CD14-positive monocyte (primary cell): ENCODE measurements at regions of chr4 and their contacts with region 1.

Region 1: GRCh38 chr4:781493-782216 is 44.3 kb downstream of the CPLX1 start:
- DNase-seq: peak; percentile 96 to 99 (median 98)
- H3K4me3 ChIP-seq: peak overlapping the region; percentile 76 to 88 (median 86)
- H3K4me3 Mint-ChIP-seq: peak overlapping the region; percentile 86 to 93
- H3K27ac ChIP-seq: peak overlapping the region; percentile 83 to 98
- H3K27ac Mint-ChIP-seq: peak overlapping the region; percentile 90 to 97 (median 96)
- H3K4me1 ChIP-seq: peaks cover 32 to 38% of the 10 kb centered on the region in 2 donors
- H3K4me1 Mint-ChIP-seq: peaks cover 45% of the 10 kb centered on the region
- H3K27me3 ChIP-seq: peaks cover 4 to 24% of the 10 kb centered on the region in 2 donors
- H3K27me3 Mint-ChIP-seq: peaks cover 20 to 28% (median 23%) of the 10 kb centered on the region in 3 donors
- CTCF ChIP-seq: no peak

Region 2: GRCh38 chr4:683982-684622 is 97.6 kb before region 1 on chr4:
- intact Hi-C with region 1: loop called in 1 of 2 experiments (anchors 5 kb)
- DNase-seq: peak; percentile 50 to 62 (median 54)
- H3K4me3 ChIP-seq: no peak overlapping the region
- H3K4me3 Mint-ChIP-seq: no peak overlapping the region
- H3K27ac ChIP-seq: peak overlapping the region in 1 of 2 donors; percentile 5
- H3K27ac Mint-ChIP-seq: peak overlapping the region in 3 of 7 donors; percentile 25 to 48 (median 33)
- H3K4me1 ChIP-seq: peaks cover 47 to 56% of the 10 kb centered on the region in 2 donors
- H3K4me1 Mint-ChIP-seq: peaks cover 45% of the 10 kb centered on the region
- H3K27me3 ChIP-seq: no peaks in the 10 kb centered on the region
- H3K27me3 Mint-ChIP-seq: peaks cover 1 to 13% (median 8%) of the 10 kb centered on the region in 3 donors
- CTCF ChIP-seq: peak; percentile 97

Region 3: GRCh38 chr4:705278-706082 is 76.2 kb before region 1 on chr4 and contains the start of gene PCGF3:
- intact Hi-C with region 1: loop called (anchors 5 kb)
- DNase-seq: peak; percentile 92 to 96 (median 93)
- H3K4me3 ChIP-seq: peak within 1 kb of the TSS; percentile 60 to 94 (median 86)
- H3K4me3 Mint-ChIP-seq: peak within 1 kb of the TSS; percentile 78 to 88
- H3K27ac ChIP-seq: peak within 1 kb of the TSS; percentile 40 to 96
- H3K27ac Mint-ChIP-seq: peak within 1 kb of the TSS; percentile 69 to 97 (median 92)
- H3K4me1 ChIP-seq: peaks cover 41 to 58% of the 10 kb centered on the region in 2 donors
- H3K4me1 Mint-ChIP-seq: peaks cover 34% of the 10 kb centered on the region
- H3K27me3 ChIP-seq: no peaks in the 10 kb centered on the region
- H3K27me3 Mint-ChIP-seq: peaks cover 2 to 4% (median 3%) of the 10 kb centered on the region in 3 donors
- CTCF ChIP-seq: no peak
- polyA plus RNA-seq, gene PCGF3: 7.0 to 163 (median 8.3) TPM

Region 4: DNA sequence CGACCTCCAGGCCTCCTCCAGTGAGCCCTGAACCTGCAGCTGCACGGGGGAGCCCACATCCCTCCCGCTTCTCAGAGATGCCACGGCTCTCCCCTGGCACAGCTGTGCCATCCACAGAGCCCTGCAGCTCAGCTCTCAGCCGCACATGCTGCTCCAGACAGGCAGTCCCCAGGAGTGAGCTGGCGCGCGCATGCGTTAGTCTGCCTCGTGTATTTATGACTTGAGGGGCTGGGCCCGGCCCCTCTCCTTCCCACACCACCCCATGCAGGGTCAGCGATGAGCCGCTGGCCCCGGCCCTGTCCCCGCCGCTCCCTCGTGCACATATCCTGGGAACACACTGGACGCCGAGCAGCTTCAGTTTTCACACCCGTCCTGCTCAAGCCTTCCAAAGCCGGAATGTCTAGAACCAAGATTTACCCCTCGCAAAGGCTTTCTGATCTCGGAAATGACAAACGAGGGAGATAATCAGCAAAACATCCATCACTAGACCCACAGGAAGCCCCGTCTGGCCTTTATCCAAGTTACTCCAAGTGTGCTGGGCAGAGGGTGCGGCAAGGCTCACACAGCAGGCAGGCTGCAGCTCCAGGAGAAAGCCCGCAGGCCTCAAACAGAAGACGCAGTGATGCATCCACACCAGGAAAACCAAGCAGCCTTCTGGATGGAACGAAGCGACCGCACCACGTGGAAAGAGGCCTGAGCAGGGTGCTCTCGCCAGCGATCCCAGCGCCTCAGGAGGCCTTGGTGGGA is 126.2 kb after region 1 on chr4:
- intact Hi-C with region 1: no loop called
- DNase-seq: no peak
- H3K4me3 ChIP-seq: no peak overlapping the region
- H3K4me3 Mint-ChIP-seq: no peak overlapping the region
- H3K27ac ChIP-seq: no peak overlapping the region
- H3K27ac Mint-ChIP-seq: no peak overlapping the region
- H3K4me1 ChIP-seq: no peaks in the 10 kb centered on the region
- H3K4me1 Mint-ChIP-seq: no peaks in the 10 kb centered on the region
- H3K27me3 ChIP-seq: no peaks in the 10 kb centered on the region
- H3K27me3 Mint-ChIP-seq: no peaks in the 10 kb centered on the region
- CTCF ChIP-seq: no peak

Region 5: DNA sequence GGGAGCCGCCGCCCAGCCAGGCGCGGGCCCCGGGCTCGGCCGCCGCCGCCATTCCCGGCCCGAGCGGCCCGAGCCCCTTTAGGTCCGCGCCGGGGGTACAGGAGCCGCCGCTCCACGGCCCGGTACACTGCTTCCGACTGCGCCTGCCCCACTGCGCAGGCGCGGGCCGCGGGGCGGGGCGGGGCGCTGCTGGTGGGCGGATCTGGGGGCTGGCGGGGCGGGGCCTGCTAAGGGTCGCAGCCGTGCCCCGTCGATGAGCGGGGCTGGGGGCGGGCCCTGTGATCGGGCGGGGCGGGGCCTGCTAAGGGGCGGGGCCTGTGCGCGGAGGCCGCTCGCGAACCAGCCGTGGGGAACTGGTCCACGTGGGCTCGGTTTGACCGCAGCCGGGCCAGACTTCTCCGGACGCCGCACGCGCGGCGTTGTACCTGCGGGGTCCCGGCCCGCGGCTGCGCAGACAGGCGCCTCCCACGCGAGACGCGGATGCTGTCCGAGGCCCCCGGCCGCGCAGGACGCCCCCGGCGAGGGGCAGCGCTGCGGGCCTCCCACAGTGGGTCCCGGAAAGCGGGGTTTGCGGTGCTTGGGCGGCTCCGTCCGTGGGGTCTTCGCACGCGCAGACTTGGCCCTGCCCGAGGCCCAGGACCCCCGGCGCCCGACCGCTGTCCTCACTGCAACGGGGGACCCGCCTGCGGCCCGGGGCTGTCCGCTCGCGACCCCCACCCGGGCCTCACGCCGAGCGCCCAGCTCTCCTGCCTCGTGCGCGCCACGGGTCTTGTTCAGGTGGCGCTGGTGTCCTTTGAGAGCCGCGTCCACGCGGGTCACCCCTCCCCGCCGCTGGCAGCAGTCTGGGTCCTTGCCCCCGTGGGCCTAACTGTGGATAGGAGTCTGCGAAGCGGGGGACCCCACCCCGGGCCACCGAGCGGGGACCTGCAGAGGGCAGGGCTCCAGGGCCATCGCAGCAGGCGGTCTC is 192.1 kb after region 1 on chr4 and contains the start of gene DGKQ:
- intact Hi-C with region 1: loop called in 1 of 2 experiments (anchors 10 kb)
- DNase-seq: peak; percentile 85 to 93 (median 89)
- H3K4me3 ChIP-seq: peak within 1 kb of the TSS; percentile 46 to 90 (median 87)
- H3K4me3 Mint-ChIP-seq: peak within 1 kb of the TSS; percentile 68 to 77
- H3K27ac ChIP-seq: peak within 1 kb of the TSS in 1 of 2 donors; percentile 41
- H3K27ac Mint-ChIP-seq: peak within 1 kb of the TSS in 2 of 7 donors; percentile 58 to 83
- H3K4me1 ChIP-seq: peaks cover 33 to 47% of the 10 kb centered on the region in 2 donors
- H3K4me1 Mint-ChIP-seq: peaks cover 17% of the 10 kb centered on the region
- H3K27me3 ChIP-seq: peaks cover 0 to 14% of the 10 kb centered on the region in 2 donors
- H3K27me3 Mint-ChIP-seq: peaks cover 2 to 18% (median 8%) of the 10 kb centered on the region in 3 donors
- CTCF ChIP-seq: no peak
- polyA plus RNA-seq, gene DGKQ: 0.58 to 23.1 (median 2.4) TPM

Region 6: GRCh38 chr4:1289207-1290164 is 507.8 kb after region 1 on chr4 and contains the start of gene MAEA:
- intact Hi-C with region 1: loop called in 1 of 2 experiments (anchors 5 kb)
- DNase-seq: peak; percentile 96 to 97 (median 96)
- H3K4me3 ChIP-seq: peak within 1 kb of the TSS; percentile 54 to 82 (median 73)
- H3K4me3 Mint-ChIP-seq: peak within 1 kb of the TSS; percentile 97
- H3K27ac ChIP-seq: peak within 1 kb of the TSS; percentile 65 to 91
- H3K27ac Mint-ChIP-seq: peak within 1 kb of the TSS; percentile 90 to 97 (median 96)
- H3K4me1 ChIP-seq: peaks cover 25 to 36% of the 10 kb centered on the region in 2 donors
- H3K4me1 Mint-ChIP-seq: peaks cover 34% of the 10 kb centered on the region
- H3K27me3 ChIP-seq: no peaks in the 10 kb centered on the region
- H3K27me3 Mint-ChIP-seq: peaks cover 0 to 1% (median 0%) of the 10 kb centered on the region in 3 donors
- CTCF ChIP-seq: no peak
- polyA plus RNA-seq, gene MAEA: 34.3 to 83.5 (median 37.7) TPM

Region 7: GRCh38 chr4:1883583-1883982 is 1101.9 kb after region 1 on chr4:
- intact Hi-C with region 1: loop called in 1 of 2 experiments (anchors 10 kb)
- DNase-seq: no peak
- H3K4me3 ChIP-seq: no peak overlapping the region
- H3K4me3 Mint-ChIP-seq: no peak overlapping the region
- H3K27ac ChIP-seq: no peak overlapping the region
- H3K27ac Mint-ChIP-seq: peak overlapping the region in 1 of 7 donors; percentile 15
- H3K4me1 ChIP-seq: peaks cover 9 to 16% of the 10 kb centered on the region in 2 donors
- H3K4me1 Mint-ChIP-seq: peaks cover 33% of the 10 kb centered on the region
- H3K27me3 ChIP-seq: no peaks in the 10 kb centered on the region
- H3K27me3 Mint-ChIP-seq: no peaks in the 10 kb centered on the region
- CTCF ChIP-seq: no peak